Colonic mucosa (tissue), 4 donors: ENCODE measurements at regions of chr2 and their contacts with region 1.

Region 1: GRCh38 chr2:10305715-10306114 is 3.0 kb downstream of the HPCAL1 start:
- DNase-seq: no peak
- H3K4me3 ChIP-seq: no peak overlapping the region
- H3K27ac ChIP-seq: peak overlapping the region; percentile 85
- H3K4me1 ChIP-seq: peaks cover 20% of the 10 kb centered on the region
- H3K27me3 ChIP-seq: no peaks in the 10 kb centered on the region
- CTCF ChIP-seq: no peak

Region 2: DNA sequence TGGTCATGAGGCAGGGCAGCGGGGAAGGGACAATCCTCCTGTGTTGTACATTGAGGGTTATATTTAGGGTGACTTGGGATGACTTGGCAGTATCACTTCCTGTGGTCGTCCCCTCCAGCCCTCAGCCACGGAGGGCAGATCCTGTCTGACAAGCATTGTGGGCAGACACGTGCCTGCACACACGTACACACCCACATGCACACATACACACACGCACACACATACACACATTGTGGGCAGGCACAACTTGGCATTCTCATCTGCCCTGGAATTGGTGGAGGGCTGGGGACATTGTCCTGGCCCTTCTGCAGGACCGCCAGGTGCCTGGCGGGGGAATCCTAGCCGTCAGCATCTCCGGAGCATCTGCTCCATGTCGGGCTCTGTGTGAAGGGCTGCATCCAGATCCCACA is 94.9 kb after region 1 on chr2:
- intact Hi-C with region 1: loop called (anchors 5 kb)
- DNase-seq: peak; percentile 38
- H3K4me3 ChIP-seq: no peak overlapping the region
- H3K27ac ChIP-seq: peak overlapping the region; percentile 22
- H3K4me1 ChIP-seq: peaks cover 15% of the 10 kb centered on the region
- H3K27me3 ChIP-seq: no peaks in the 10 kb centered on the region
- CTCF ChIP-seq: no peak